ENCODE measurements at regions of chr1 and their contacts with region 1.

Region 1: GRCh38 chr1:145963995-145964901 is at the starts of genes ANKRD34A and POLR3GL:
- DNase-seq: peak; percentile 95
- H3K4me3 ChIP-seq: peak within 1 kb of the TSS; percentile 61 to 67 (median 62)
- H3K27ac ChIP-seq: peak within 1 kb of the TSS; percentile 63
- H3K4me1 ChIP-seq: peaks cover 39% of the 10 kb centered on the region
- H3K27me3 ChIP-seq: no peaks in the 10 kb centered on the region
- CTCF ChIP-seq: no peak
- total RNA-seq, gene ANKRD34A: 1.3 to 1.6 TPM
- total RNA-seq, gene POLR3GL: 4.7 to 10.0 TPM

Region 2: GRCh38 chr1:145845514-145846161 is 118.6 kb before region 1 on chr1 and contains the start of gene NUDT17:
- CTCF ChIA-PET with region 1: no interaction called
- dilution Hi-C with region 1: no loop called
- in situ Hi-C with region 1: no loop called
- intact Hi-C with region 1: loop called (anchors 5 kb)
- DNase-seq: peak; percentile 53
- H3K4me3 ChIP-seq: peak within 1 kb of the TSS; percentile 22 to 66 (median 52)
- H3K27ac ChIP-seq: no peak within 1 kb of the TSS
- H3K4me1 ChIP-seq: peaks cover 32% of the 10 kb centered on the region
- H3K27me3 ChIP-seq: no peaks in the 10 kb centered on the region
- CTCF ChIP-seq: peak; percentile 73 to 97
- total RNA-seq, gene NUDT17: 2.7 to 4.3 TPM

Region 3: DNA sequence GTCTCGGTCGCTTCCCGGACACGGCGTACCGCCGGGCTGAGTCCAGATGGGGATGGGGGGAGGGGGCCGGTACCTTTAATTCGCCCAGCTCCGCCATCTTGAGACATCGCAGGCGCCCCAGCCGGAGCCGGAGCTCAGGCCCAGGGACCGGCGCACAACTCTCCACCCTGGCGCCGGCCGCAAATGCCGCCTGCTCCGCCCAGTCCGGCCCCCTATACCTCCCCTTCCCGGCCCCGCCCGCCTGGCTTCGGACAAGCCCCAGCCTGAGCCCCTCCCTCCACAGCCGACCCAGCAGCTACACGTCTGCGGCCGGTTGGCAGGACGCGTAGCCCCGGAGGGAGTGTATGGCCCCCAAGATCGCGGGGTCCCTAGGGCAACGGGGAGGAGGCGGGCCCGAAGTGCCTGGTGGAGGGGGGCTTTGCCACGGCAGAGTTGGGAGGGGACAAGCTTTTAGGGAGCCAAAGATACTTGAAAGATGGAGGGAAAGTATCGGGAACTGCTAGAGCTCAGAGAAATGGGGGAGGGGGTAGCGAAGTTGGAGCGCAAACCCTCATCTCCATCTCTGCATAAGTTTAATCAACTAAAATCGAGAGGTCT is 105.3 kb before region 1 on chr1 and contains the start of gene PIAS3:
- CTCF ChIA-PET with region 1: no interaction called
- dilution Hi-C with region 1: no loop called
- in situ Hi-C with region 1: loop called in 1 of 2 experiments (anchors 10 kb)
- intact Hi-C with region 1: no loop called
- DNase-seq: peak; percentile 93
- H3K4me3 ChIP-seq: peak within 1 kb of the TSS; percentile 56 to 94 (median 80)
- H3K27ac ChIP-seq: peak within 1 kb of the TSS; percentile 29
- H3K4me1 ChIP-seq: peaks cover 13% of the 10 kb centered on the region
- H3K27me3 ChIP-seq: no peaks in the 10 kb centered on the region
- CTCF ChIP-seq: no peak
- total RNA-seq, gene PIAS3: 21.7 to 58.8 TPM

Region 4: GRCh38 chr1:145879775-145880174 is 84.5 kb before region 1 on chr1:
- CTCF ChIA-PET with region 1: no interaction called
- dilution Hi-C with region 1: loop called (anchors 5 kb)
- in situ Hi-C with region 1: no loop called
- intact Hi-C with region 1: no loop called
- DNase-seq: no peak
- H3K4me3 ChIP-seq: no peak overlapping the region
- H3K27ac ChIP-seq: no peak overlapping the region
- H3K4me1 ChIP-seq: peaks cover 9% of the 10 kb centered on the region
- H3K27me3 ChIP-seq: no peaks in the 10 kb centered on the region
- CTCF ChIP-seq: no peak

Region 5: GRCh38 chr1:145927063-145927886 is 37.0 kb before region 1 on chr1 and contains the start of gene RBM8A:
- CTCF ChIA-PET with region 1: interaction called, 3 read pairs
- dilution Hi-C with region 1: no loop called
- in situ Hi-C with region 1: no loop called
- intact Hi-C with region 1: loop called (anchors 1 kb)
- DNase-seq: peak; percentile 97
- H3K4me3 ChIP-seq: peak within 1 kb of the TSS; percentile 77 to 99 (median 80)
- H3K27ac ChIP-seq: peak within 1 kb of the TSS; percentile 94
- H3K4me1 ChIP-seq: peaks cover 3% of the 10 kb centered on the region
- H3K27me3 ChIP-seq: no peaks in the 10 kb centered on the region
- CTCF ChIP-seq: peak; percentile 60 to 61
- total RNA-seq, gene RBM8A: 80.2 to 172 TPM

Region 6: GRCh38 chr1:146019231-146020057 is 55.2 kb after region 1 on chr1:
- CTCF ChIA-PET with region 1: no interaction called
- dilution Hi-C with region 1: loop called (anchors 5 kb)
- in situ Hi-C with region 1: no loop called
- intact Hi-C with region 1: no loop called
- DNase-seq: no peak
- H3K4me3 ChIP-seq: no peak overlapping the region
- H3K27ac ChIP-seq: no peak overlapping the region
- H3K4me1 ChIP-seq: no peaks in the 10 kb centered on the region
- H3K27me3 ChIP-seq: peaks cover 9% of the 10 kb centered on the region
- CTCF ChIP-seq: no peak

Measured in mammary epithelial cell (primary cell).